IMR-90 (cell line): ENCODE measurements at regions of chr12 and their contacts with region 1.

Region 1: DNA sequence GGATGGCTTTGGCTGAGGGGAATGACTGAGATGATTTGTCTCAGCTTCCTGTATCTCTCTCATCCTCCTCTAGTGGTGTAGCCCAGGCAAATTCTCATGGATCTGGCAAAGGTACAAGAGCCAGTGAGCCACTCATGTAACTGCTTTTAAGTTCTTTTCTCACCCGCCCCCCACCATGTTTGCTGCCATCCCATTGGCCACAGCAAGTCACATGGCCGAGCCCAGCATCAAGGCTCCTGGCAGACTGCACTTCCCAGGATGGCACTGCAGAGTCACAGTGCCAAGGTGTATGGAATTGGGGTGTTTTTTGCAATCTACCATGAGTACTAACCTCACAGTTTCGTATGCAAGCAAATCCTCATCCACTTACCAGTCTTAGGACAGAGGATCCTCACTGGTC is 50.9 kb downstream of the CHST11 start:
- DNase-seq: no peak
- ATAC-seq: no peak
- H3K4me3 ChIP-seq: no peak overlapping the region
- H3K27ac ChIP-seq: no peak overlapping the region
- H3K4me1 ChIP-seq: no peaks in the 10 kb centered on the region
- H3K27me3 ChIP-seq: peaks cover 27% of the 10 kb centered on the region
- CTCF ChIP-seq: no peak
- POLR2A ChIP-seq: no peak
- RAD21 ChIP-seq: no peak

Region 2: GRCh38 chr12:103978384-103978982 is 529.2 kb before region 1 on chr12:
- CTCF ChIA-PET with region 1: no interaction called
- POLR2A ChIA-PET with region 1: no interaction called
- dilution Hi-C with region 1: no loop called
- in situ Hi-C with region 1: no loop called
- intact Hi-C with region 1: no loop called
- DNase-seq: no peak
- ATAC-seq: no peak
- H3K4me3 ChIP-seq: no peak overlapping the region
- H3K27ac ChIP-seq: no peak overlapping the region
- H3K4me1 ChIP-seq: no peaks in the 10 kb centered on the region
- H3K27me3 ChIP-seq: no peaks in the 10 kb centered on the region
- CTCF ChIP-seq: no peak
- POLR2A ChIP-seq: no peak
- RAD21 ChIP-seq: no peak

Region 3: GRCh38 chr12:104549815-104550480 is 42.3 kb after region 1 on chr12:
- CTCF ChIA-PET with region 1: no interaction called
- POLR2A ChIA-PET with region 1: no interaction called
- dilution Hi-C with region 1: no loop called
- in situ Hi-C with region 1: no loop called
- intact Hi-C with region 1: loop called (anchors 2 kb)
- DNase-seq: peak; percentile 29
- ATAC-seq: no peak
- H3K4me3 ChIP-seq: no peak overlapping the region
- H3K27ac ChIP-seq: no peak overlapping the region
- H3K4me1 ChIP-seq: no peaks in the 10 kb centered on the region
- H3K27me3 ChIP-seq: peaks cover 12% of the 10 kb centered on the region
- CTCF ChIP-seq: no peak
- POLR2A ChIP-seq: no peak
- RAD21 ChIP-seq: no peak